ENCODE measurements at regions of chr7 and their contacts with region 1.

Region 1: GRCh38 chr7:44709980-44710596 is 38.6 kb upstream of the ZMIZ2 start:
- H3K4me3 ChIP-seq: no peak overlapping the region
- H3K27ac ChIP-seq: no peak overlapping the region
- H3K4me1 ChIP-seq: no peaks in the 10 kb centered on the region
- CTCF ChIP-seq: no peak

Region 2: DNA sequence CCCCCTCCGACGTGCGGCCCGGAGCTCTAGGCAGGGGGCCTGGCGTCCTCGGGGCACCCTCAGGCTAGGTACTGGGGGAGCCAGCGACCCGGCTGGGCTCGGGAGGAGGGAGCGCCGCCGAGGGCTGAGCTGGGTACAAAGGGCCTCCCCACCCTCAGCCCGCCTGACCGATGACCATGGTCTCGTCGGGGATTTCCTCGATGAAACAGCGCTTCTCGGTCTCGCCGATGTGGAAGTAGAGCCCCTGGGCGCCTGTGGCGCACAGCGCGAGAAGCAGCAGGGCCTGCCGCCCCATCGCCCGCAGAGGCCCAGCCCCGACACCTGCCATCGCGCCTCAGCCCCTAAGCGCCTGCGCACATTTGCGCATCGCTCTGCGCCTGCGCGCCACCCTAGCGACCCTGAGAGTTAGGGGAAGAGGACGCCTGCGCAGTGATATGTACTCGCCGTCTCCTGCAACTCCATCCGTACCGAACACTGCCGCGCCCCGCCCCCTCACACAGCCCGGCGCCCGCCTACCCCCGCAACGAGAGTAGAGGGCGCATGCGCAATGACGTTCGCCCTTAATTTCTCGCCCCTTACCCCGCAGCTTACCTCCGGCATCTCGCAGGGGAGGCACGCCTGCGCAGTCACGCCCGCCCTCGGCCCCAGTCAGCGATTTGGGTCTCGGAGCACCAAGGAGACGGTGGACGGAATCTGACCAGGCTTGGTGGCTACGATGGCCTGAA is 128.0 kb before region 1 on chr7 and contains the start of gene TMED4:
- CTCF ChIA-PET with region 1: no interaction called
- POLR2A ChIA-PET with region 1: interaction called, 10 read pairs
- H3K4me3 ChIP-seq: peak within 1 kb of the TSS; percentile 88
- H3K27ac ChIP-seq: peak within 1 kb of the TSS; percentile 94
- H3K4me1 ChIP-seq: no peaks in the 10 kb centered on the region
- CTCF ChIP-seq: peak; percentile 45; the same call in 1 of the 2 replicates

Region 3: GRCh38 chr7:44748045-44748947 is 38.2 kb after region 1 on chr7 and contains the start of gene ZMIZ2:
- CTCF ChIA-PET with region 1: no interaction called
- POLR2A ChIA-PET with region 1: no interaction called
- H3K4me3 ChIP-seq: peak within 1 kb of the TSS; percentile 92
- H3K27ac ChIP-seq: peak within 1 kb of the TSS; percentile 71
- H3K4me1 ChIP-seq: no peaks in the 10 kb centered on the region; the same call in 1 of the 2 replicates
- CTCF ChIP-seq: no peak